T-cell (primary cell): ENCODE measurements at regions of chr2 and their contacts with region 1.

Region 1: GRCh38 chr2:30239308-30239985 is 8.1 kb downstream of the LBH start:
- DNase-seq: peak; percentile 51 to 92 (median 71)
- ATAC-seq: peak; percentile 43 to 68 (median 55)
- H3K4me3 ChIP-seq: peak overlapping the region in 1 of 2 donors; percentile 2
- H3K4me3 Mint-ChIP-seq: peak overlapping the region; percentile 64 to 98 (median 79)
- H3K27ac ChIP-seq: peak overlapping the region; percentile 40
- H3K27ac Mint-ChIP-seq: peak overlapping the region; percentile 82 to 96
- H3K4me1 ChIP-seq: peaks cover 64 to 90% of the 10 kb centered on the region in 2 experiments
- H3K4me1 Mint-ChIP-seq: peaks cover 89 to 95% (median 93%) of the 10 kb centered on the region in 3 donors
- H3K27me3 ChIP-seq: no peaks in the 10 kb centered on the region
- H3K27me3 Mint-ChIP-seq: no peaks in the 10 kb centered on the region

Region 2: GRCh38 chr2:30026087-30027055 is 213.1 kb before region 1 on chr2:
- CTCF ChIA-PET with region 1: no interaction called
- POLR2A ChIA-PET with region 1: no interaction called
- DNase-seq: peak in 1 of 35 experiments; percentile 4
- ATAC-seq: no peak
- H3K4me3 ChIP-seq: no peak overlapping the region
- H3K4me3 Mint-ChIP-seq: no peak overlapping the region
- H3K27ac ChIP-seq: no peak overlapping the region
- H3K27ac Mint-ChIP-seq: no peak overlapping the region
- H3K4me1 ChIP-seq: no peaks in the 10 kb centered on the region
- H3K4me1 Mint-ChIP-seq: no peaks in the 10 kb centered on the region
- H3K27me3 ChIP-seq: peaks cover 0 to 7% of the 10 kb centered on the region in 2 experiments
- H3K27me3 Mint-ChIP-seq: peaks cover 11 to 17% of the 10 kb centered on the region in 2 donors

Region 3: GRCh38 chr2:30165050-30165520 is 74.4 kb before region 1 on chr2:
- CTCF ChIA-PET with region 1: interaction called, 9 to 23 read pairs
- POLR2A ChIA-PET with region 1: interaction called, 4 to 13 read pairs
- DNase-seq: peak in 34 of 35 experiments; percentile 6 to 89 (median 66)
- ATAC-seq: peak; percentile 43 to 96 (median 92)
- H3K4me3 ChIP-seq: no peak overlapping the region
- H3K4me3 Mint-ChIP-seq: peak overlapping the region in 1 of 3 donors; percentile 34
- H3K27ac ChIP-seq: no peak overlapping the region
- H3K27ac Mint-ChIP-seq: no peak overlapping the region
- H3K4me1 ChIP-seq: peaks cover 0 to 3% of the 10 kb centered on the region in 2 experiments
- H3K4me1 Mint-ChIP-seq: peaks cover 8 to 33% (median 11%) of the 10 kb centered on the region in 3 donors
- H3K27me3 ChIP-seq: no peaks in the 10 kb centered on the region
- H3K27me3 Mint-ChIP-seq: no peaks in the 10 kb centered on the region

Region 4: GRCh38 chr2:30191819-30192271 is 47.6 kb before region 1 on chr2:
- CTCF ChIA-PET with region 1: no interaction called
- POLR2A ChIA-PET with region 1: no interaction called
- DNase-seq: no peak
- ATAC-seq: no peak
- H3K4me3 ChIP-seq: no peak overlapping the region
- H3K4me3 Mint-ChIP-seq: no peak overlapping the region
- H3K27ac ChIP-seq: no peak overlapping the region
- H3K27ac Mint-ChIP-seq: no peak overlapping the region
- H3K4me1 ChIP-seq: no peaks in the 10 kb centered on the region
- H3K4me1 Mint-ChIP-seq: peaks cover 0 to 4% (median 2%) of the 10 kb centered on the region in 3 donors
- H3K27me3 ChIP-seq: peaks cover 0 to 5% of the 10 kb centered on the region in 2 experiments
- H3K27me3 Mint-ChIP-seq: peaks cover 0 to 3% of the 10 kb centered on the region in 2 donors

Region 5: GRCh38 chr2:30257266-30258214 is 18.1 kb after region 1 on chr2:
- CTCF ChIA-PET with region 1: interaction called, 5 to 7 read pairs
- POLR2A ChIA-PET with region 1: interaction called, 8 to 12 read pairs
- DNase-seq: peak in 23 of 35 experiments; percentile 12 to 77 (median 38)
- ATAC-seq: peak; percentile 68 to 78 (median 75)
- H3K4me3 ChIP-seq: peak overlapping the region; percentile 6 to 46
- H3K4me3 Mint-ChIP-seq: peak overlapping the region; percentile 60 to 78 (median 66)
- H3K27ac ChIP-seq: peak overlapping the region; percentile 58
- H3K27ac Mint-ChIP-seq: peak overlapping the region; percentile 94 to 99
- H3K4me1 ChIP-seq: peaks cover 80 to 89% of the 10 kb centered on the region in 2 experiments
- H3K4me1 Mint-ChIP-seq: peaks cover 99 to 100% (median 99%) of the 10 kb centered on the region in 3 donors
- H3K27me3 ChIP-seq: no peaks in the 10 kb centered on the region
- H3K27me3 Mint-ChIP-seq: no peaks in the 10 kb centered on the region

Region 6: GRCh38 chr2:30273261-30273861 is 33.9 kb after region 1 on chr2:
- CTCF ChIA-PET with region 1: no interaction called
- POLR2A ChIA-PET with region 1: interaction called in 1 of 2 experiments, 11 read pairs
- DNase-seq: no peak
- ATAC-seq: no peak
- H3K4me3 ChIP-seq: no peak overlapping the region
- H3K4me3 Mint-ChIP-seq: no peak overlapping the region
- H3K27ac ChIP-seq: no peak overlapping the region
- H3K27ac Mint-ChIP-seq: peak overlapping the region in 1 of 2 donors; percentile 28
- H3K4me1 ChIP-seq: peaks cover under 1 to 12% of the 10 kb centered on the region in 2 experiments
- H3K4me1 Mint-ChIP-seq: peaks cover 39 to 59% (median 41%) of the 10 kb centered on the region in 3 donors
- H3K27me3 ChIP-seq: no peaks in the 10 kb centered on the region
- H3K27me3 Mint-ChIP-seq: no peaks in the 10 kb centered on the region

Region 7: DNA sequence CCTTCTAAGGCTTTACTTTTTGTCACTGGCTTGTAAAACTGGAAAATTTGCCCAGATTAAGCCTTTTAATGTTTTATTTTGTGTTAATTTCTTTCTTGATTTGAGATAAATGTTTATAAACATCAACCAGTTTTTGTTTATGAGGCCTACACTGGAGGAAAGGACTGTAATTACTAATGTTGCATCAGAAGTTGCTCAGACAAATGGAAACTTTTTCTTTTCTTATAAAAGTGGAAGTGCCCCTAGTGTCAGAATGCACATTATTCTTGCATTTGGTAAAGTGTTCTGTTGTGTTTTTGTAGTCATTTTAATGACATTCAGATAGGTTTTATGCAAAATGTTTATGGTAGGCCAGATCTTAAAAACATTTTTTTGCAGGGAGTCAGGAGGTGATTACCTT is 232.9 kb after region 1 on chr2:
- CTCF ChIA-PET with region 1: interaction called in 1 of 2 experiments, 12 read pairs
- POLR2A ChIA-PET with region 1: no interaction called
- DNase-seq: no peak
- ATAC-seq: no peak
- H3K4me3 ChIP-seq: no peak overlapping the region
- H3K4me3 Mint-ChIP-seq: no peak overlapping the region
- H3K27ac ChIP-seq: no peak overlapping the region
- H3K27ac Mint-ChIP-seq: no peak overlapping the region
- H3K4me1 ChIP-seq: peaks cover 0 to 12% of the 10 kb centered on the region in 2 experiments
- H3K4me1 Mint-ChIP-seq: peaks cover 39 to 62% (median 45%) of the 10 kb centered on the region in 3 donors
- H3K27me3 ChIP-seq: no peaks in the 10 kb centered on the region
- H3K27me3 Mint-ChIP-seq: no peaks in the 10 kb centered on the region